IMR-90 (cell line): ENCODE measurements at regions of chr3 and their contacts with region 1.

Region 1: GRCh38 chr3:8769088-8769822 is at the start of gene OXTR:
- DNase-seq: peak; percentile 82
- ATAC-seq: peak; percentile 100
- H3K4me3 ChIP-seq: peak within 1 kb of the TSS; percentile 82
- H3K27ac ChIP-seq: no peak within 1 kb of the TSS
- H3K4me1 ChIP-seq: peaks cover 6% of the 10 kb centered on the region; the same call in 1 of the 2 replicates
- H3K27me3 ChIP-seq: peaks cover 21% of the 10 kb centered on the region; the same call in 1 of the 2 replicates
- CTCF ChIP-seq: peak; percentile 99
- POLR2A ChIP-seq: no peak
- RAD21 ChIP-seq: peak; percentile 96
- total RNA-seq, gene OXTR: 56.1 and 76.9 TPM in 2 replicates

Region 2: DNA sequence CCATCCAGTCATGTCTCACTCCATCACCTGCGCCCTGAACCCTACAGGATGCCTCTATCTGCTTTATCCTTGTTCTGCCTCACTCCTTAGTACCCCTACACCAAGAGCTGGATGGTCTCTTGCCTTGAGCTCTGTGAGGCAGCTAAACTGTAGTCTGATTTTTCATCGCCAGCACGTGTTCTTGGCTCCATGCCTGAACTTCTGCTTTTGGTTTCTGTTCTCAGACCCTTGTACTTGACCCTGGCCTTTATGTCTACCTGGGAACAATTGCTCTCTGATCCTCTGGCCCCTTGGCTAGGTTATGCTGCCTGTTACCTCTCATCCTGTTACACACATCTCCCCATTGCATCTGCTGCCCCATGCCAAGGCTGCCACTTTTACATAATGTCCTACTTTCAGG is 585.6 kb before region 1 on chr3:
- CTCF ChIA-PET with region 1: no interaction called
- POLR2A ChIA-PET with region 1: no interaction called
- dilution Hi-C with region 1: no loop called
- in situ Hi-C with region 1: no loop called
- intact Hi-C with region 1: no loop called
- DNase-seq: no peak
- ATAC-seq: no peak
- H3K4me3 ChIP-seq: no peak overlapping the region
- H3K27ac ChIP-seq: no peak overlapping the region
- H3K4me1 ChIP-seq: no peaks in the 10 kb centered on the region
- H3K27me3 ChIP-seq: no peaks in the 10 kb centered on the region
- CTCF ChIP-seq: no peak
- POLR2A ChIP-seq: no peak
- RAD21 ChIP-seq: no peak

Region 3: GRCh38 chr3:8441969-8442559 is 327.2 kb before region 1 on chr3:
- CTCF ChIA-PET with region 1: no interaction called
- POLR2A ChIA-PET with region 1: no interaction called
- dilution Hi-C with region 1: no loop called
- in situ Hi-C with region 1: no loop called
- intact Hi-C with region 1: loop called (anchors 1 kb)
- DNase-seq: peak; percentile 77
- ATAC-seq: peak; percentile 30; the same call in 1 of the 2 replicates
- H3K4me3 ChIP-seq: no peak overlapping the region
- H3K27ac ChIP-seq: peak overlapping the region; percentile 40; the same call in 1 of the 2 replicates
- H3K4me1 ChIP-seq: peaks cover 21% of the 10 kb centered on the region
- H3K27me3 ChIP-seq: peaks cover 2% of the 10 kb centered on the region; the same call in 1 of the 2 replicates
- CTCF ChIP-seq: peak; percentile 84
- POLR2A ChIP-seq: no peak
- RAD21 ChIP-seq: peak; percentile 87

Region 4: DNA sequence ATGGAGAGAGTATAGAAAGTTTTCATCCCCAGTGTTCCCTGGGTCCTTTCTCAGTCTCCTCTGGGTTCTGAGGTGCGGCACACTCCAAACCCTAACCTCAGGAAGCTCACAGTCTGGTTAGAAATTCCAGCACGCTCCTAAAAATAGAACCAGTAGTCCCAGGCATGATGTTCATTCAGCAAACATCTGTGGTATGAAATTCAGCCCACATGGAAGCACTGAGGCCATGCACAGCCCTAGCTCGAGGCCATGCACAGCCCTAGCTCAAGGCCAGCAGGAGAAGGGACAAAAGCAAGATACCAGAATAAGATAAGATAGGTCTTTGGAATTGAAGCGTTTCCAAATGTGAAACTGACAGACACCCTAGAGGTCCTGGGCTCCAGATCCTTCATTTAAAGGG is 82.5 kb after region 1 on chr3:
- CTCF ChIA-PET with region 1: interaction called, 11 read pairs
- POLR2A ChIA-PET with region 1: no interaction called
- dilution Hi-C with region 1: no loop called
- in situ Hi-C with region 1: no loop called
- intact Hi-C with region 1: no loop called
- DNase-seq: peak; percentile 74
- ATAC-seq: peak; percentile 70
- H3K4me3 ChIP-seq: no peak overlapping the region
- H3K27ac ChIP-seq: no peak overlapping the region
- H3K4me1 ChIP-seq: peaks cover 16% of the 10 kb centered on the region
- H3K27me3 ChIP-seq: no peaks in the 10 kb centered on the region
- CTCF ChIP-seq: no peak
- POLR2A ChIP-seq: no peak
- RAD21 ChIP-seq: no peak

Region 5: GRCh38 chr3:8938021-8938420 is 168.8 kb after region 1 on chr3:
- CTCF ChIA-PET with region 1: interaction called, 4 read pairs
- POLR2A ChIA-PET with region 1: no interaction called
- dilution Hi-C with region 1: no loop called
- in situ Hi-C with region 1: no loop called
- intact Hi-C with region 1: loop called (anchors 1 kb)
- DNase-seq: peak; percentile 59
- ATAC-seq: peak; percentile 62
- H3K4me3 ChIP-seq: no peak overlapping the region
- H3K27ac ChIP-seq: no peak overlapping the region
- H3K4me1 ChIP-seq: peaks cover 11% of the 10 kb centered on the region; the same call in 1 of the 2 replicates
- H3K27me3 ChIP-seq: no peaks in the 10 kb centered on the region
- CTCF ChIP-seq: peak; percentile 50
- POLR2A ChIP-seq: no peak
- RAD21 ChIP-seq: peak; percentile 51

Region 6: DNA sequence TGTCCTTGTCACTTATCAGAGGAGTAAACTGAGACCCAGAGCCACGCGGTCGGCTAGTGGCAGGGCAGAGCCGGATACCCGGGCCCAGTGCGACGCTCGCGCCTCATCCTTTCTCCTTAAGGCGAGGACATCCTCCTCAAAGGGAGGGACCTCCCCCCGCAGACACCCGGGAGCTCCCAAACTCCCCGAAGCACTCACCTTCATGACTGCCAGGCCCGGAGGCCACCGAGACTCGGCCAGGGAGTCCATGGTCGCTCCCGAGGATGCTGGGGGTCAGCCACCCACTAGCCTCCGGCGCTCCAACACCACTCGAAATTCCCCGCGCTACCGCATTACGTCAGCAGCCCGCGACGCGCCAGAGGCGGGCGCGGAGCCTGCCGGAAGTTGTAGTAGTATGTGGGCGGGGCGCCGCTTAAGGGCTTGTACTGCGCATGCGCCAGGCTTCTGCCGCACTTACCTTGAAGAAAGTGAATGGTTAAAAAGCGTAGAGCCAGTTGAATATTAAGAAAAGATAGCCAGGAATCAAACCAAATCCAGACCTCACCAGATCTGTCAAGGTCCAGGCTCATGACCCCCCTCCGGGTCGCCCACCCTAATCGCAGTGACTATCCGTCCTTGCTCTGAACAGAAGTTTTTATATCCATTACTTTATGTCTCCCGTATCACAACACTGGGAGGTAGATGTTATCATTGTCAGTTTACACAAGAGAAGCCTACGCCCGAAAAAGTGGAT is 194.0 kb after region 1 on chr3 and contains the start of gene RAD18:
- CTCF ChIA-PET with region 1: interaction called, 7 read pairs
- POLR2A ChIA-PET with region 1: no interaction called
- dilution Hi-C with region 1: no loop called
- in situ Hi-C with region 1: loop called (anchors 10 kb)
- intact Hi-C with region 1: loop called (anchors 2 kb)
- DNase-seq: peak; percentile 89
- ATAC-seq: peak; percentile 97
- H3K4me3 ChIP-seq: peak within 1 kb of the TSS; percentile 78
- H3K27ac ChIP-seq: peak within 1 kb of the TSS; percentile 55
- H3K4me1 ChIP-seq: peaks cover 5% of the 10 kb centered on the region
- H3K27me3 ChIP-seq: 0 out of 2 replicates have a peak, but pooled peaks cover 2% of the 10 kb centered on the region
- CTCF ChIP-seq: no peak
- POLR2A ChIP-seq: peak; percentile 57
- RAD21 ChIP-seq: no peak
- total RNA-seq, gene RAD18: 17.2 and 22.2 TPM in 2 replicates

Region 7: DNA sequence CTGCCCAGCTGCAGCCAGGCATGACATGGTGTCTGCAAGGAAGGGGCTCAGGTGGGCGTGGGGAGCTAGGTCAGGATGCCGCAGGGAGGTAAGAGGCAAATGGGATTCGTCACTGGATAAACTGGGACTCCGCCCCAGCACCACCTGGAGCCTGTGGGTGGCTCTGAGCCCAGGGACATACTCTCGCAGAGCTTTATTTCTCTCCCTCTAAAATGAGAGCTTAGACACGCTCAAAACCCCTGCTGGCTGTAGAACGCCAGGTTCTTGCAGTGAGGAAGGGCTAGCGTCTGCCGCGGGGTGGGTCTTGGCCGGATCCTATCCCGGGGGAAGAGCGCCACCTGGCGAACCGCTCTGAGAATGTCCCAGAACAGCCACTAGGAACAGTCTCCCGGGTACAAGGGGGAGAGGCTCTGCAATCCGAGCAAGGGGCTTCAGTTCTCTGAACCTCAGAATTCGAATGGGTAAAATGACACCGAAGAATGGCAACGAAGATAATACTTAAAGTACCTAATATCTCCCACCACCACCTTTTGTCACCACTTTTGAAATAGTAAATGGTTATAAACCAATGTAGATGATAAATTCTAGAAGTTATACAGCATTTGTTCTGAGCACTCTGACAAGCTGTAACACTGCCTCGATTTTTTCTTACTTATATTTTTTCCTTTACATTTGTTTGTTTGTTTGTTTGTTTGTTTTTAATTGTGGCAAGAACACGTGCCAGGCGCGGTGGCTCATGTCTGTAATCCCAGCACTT is 533.3 kb after region 1 on chr3:
- CTCF ChIA-PET with region 1: no interaction called
- POLR2A ChIA-PET with region 1: no interaction called
- dilution Hi-C with region 1: no loop called
- in situ Hi-C with region 1: no loop called
- intact Hi-C with region 1: loop called (anchors 1 kb)
- DNase-seq: peak; percentile 71
- ATAC-seq: peak; percentile 99
- H3K4me3 ChIP-seq: no peak overlapping the region
- H3K27ac ChIP-seq: no peak overlapping the region
- H3K4me1 ChIP-seq: no peaks in the 10 kb centered on the region
- H3K27me3 ChIP-seq: peaks cover 7% of the 10 kb centered on the region
- CTCF ChIP-seq: peak; percentile 95
- POLR2A ChIP-seq: peak; percentile 35; the same call in 1 of the 2 replicates
- RAD21 ChIP-seq: peak; percentile 92

Region 8: DNA sequence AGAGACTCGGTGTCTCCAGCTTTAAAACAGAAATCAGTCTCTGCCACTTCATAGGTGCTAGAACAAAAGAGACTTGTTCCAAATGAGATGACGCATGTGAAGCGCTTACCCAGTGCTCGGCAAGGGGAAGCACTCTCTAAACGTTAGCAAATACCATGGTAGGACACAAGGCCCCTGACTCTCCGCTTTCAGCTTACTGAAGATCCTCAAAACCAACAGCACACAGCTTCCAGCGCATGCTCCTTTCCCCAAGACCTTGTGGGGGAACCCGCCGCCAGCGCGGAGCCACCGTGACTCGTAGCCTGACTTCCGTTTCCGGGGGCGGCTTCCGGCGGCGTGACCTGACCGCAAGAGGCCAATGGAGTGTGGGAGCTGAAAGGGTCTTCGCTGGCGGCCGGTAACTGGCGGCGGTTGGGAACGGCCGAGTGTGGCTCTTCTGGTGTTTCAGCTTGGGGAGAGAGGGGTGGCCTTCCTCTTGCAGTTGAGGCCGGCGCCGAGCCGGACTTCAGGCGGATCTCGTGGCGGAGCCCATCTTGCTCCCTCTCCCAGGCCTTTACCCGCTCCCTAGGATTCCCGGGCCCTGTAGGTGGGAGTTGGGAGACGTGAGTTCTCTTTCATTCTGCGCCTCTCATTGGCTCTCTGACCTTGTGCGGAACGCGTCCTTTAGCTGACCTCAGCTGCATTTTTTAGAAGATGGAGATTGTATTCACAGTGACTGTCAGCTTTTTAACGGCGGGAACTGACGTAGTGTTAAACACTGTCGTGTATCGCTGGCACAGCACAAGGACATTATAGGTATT is 593.7 kb after region 1 on chr3 and contains the start of gene THUMPD3:
- CTCF ChIA-PET with region 1: no interaction called
- POLR2A ChIA-PET with region 1: no interaction called
- dilution Hi-C with region 1: no loop called
- in situ Hi-C with region 1: no loop called
- intact Hi-C with region 1: no loop called
- DNase-seq: peak; percentile 85
- ATAC-seq: peak; percentile 94
- H3K4me3 ChIP-seq: peak within 1 kb of the TSS; percentile 67
- H3K27ac ChIP-seq: peak within 1 kb of the TSS; percentile 83
- H3K4me1 ChIP-seq: peaks cover 3% of the 10 kb centered on the region
- H3K27me3 ChIP-seq: no peaks in the 10 kb centered on the region
- CTCF ChIP-seq: no peak
- POLR2A ChIP-seq: peak; percentile 91
- RAD21 ChIP-seq: no peak
- total RNA-seq, gene THUMPD3: 43.9 and 60.5 TPM in 2 replicates